Motor neuron (in vitro differentiated cells): ENCODE measurements at regions of chr15 and their contacts with region 1.

Region 1: DNA sequence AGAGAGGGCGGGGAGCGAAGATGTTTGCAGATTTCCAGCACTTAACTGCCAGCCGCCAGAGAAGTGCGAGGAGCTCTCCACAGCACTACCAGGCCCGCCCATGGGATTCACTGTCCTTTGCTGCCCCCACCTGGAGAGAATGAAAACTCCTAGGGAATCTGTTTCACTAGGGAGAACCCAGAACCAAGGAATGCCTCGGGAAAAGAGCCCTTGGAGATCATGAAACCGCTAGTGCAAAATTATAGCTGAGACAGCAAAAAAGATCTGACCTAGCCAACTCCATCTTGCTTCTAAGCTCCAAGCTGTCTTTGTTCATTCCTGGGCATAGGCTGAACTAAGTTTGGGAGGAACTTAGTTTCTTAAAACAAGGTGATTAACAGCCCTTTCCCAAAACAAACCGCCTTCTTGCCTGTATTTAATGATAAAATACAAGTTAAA is 82.6 kb upstream of the GCNT3 start:
- ATAC-seq: peak; percentile 88 to 100 (median 98)
- H3K4me3 ChIP-seq: no peak overlapping the region
- H3K27ac ChIP-seq: no peak overlapping the region
- H3K4me1 ChIP-seq: peaks cover 0 to 3% of the 10 kb centered on the region in 2 donors

Region 2: DNA sequence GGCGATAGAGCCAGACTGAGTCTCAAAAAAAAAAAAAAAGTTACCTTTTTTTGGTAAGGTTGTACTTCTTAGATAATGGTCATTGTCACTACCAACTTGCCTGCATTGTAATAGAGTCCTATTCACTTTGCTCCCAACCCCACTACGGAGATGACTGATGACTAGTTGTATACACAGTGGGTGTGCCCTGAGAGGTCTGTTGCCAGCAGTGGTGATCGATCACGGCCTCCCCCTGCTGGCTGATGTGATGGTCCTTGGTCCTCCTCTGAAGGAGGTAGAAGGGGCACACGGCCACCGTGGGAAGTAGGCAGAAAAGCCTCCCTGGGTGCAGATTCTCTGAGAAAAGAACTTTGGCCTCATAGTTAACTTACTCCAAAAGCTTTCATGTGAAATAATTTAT is 93.3 kb after region 1 on chr15:
- in situ Hi-C with region 1: loop called in 3 of 9 experiments (anchors 10 to 25 kb)
- ATAC-seq: peak; percentile 50 to 100 (median 75)
- H3K4me3 ChIP-seq: no peak overlapping the region
- H3K27ac ChIP-seq: no peak overlapping the region
- H3K4me1 ChIP-seq: no peaks in the 10 kb centered on the region

Region 3: DNA sequence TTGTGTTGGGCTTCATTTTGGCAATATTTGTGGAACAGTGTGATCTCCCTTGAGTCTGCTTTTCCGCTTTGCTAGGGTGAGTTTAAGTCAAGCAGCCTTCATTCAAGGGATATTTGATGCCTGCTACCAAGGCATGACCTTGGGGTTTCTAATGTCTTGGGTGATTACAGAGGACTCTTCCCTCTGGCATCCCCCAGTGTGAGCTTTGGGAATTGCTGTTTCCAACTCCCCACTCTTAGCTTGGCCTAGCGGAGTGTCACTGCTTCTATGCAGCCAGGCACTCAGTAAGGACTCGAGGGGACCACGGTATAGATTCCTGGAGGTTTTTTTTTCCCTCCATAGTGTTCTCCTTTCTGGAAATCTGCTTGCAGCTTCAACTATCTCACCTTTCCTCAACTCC is 103.7 kb after region 1 on chr15:
- in situ Hi-C with region 1: loop called in 3 of 9 experiments (anchors 10 to 25 kb)
- ATAC-seq: peak in 5 of 8 experiments; percentile 36 to 86 (median 72)
- H3K4me3 ChIP-seq: no peak overlapping the region
- H3K27ac ChIP-seq: no peak overlapping the region
- H3K4me1 ChIP-seq: peaks cover 0 to 4% of the 10 kb centered on the region in 2 donors

Region 4: DNA sequence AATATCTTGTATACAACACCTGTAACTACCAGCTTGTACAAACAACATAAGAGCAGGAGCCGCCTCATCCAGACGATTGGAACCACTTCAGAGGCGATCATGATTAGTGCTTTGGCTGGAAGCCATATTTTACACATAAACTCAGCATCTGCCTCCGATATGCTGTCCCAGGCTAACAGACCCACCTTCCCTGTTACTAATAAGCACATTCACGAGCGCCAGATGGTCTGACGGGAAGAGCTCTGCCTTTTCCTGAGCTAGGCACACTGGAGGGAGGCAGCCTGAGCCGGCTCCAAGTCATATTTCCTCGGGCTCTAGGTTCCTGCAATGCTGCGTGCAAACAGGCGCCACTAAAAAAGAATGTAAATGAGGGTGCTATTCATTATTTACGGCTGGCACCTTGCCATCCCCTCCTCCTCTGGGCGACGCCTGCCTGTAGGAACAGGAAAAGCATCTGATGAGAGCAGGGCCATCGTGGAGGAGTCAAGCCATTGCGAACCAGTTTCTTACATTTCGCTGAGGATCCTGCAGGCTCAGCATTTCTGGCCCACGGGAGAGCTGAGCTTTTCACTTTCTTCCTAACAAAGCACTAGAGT is 770.6 kb after region 1 on chr15:
- in situ Hi-C with region 1: loop called in 1 of 9 experiments (anchors 25 kb)
- ATAC-seq: peak; percentile 93 to 99 (median 98)
- H3K4me3 ChIP-seq: no peak overlapping the region
- H3K27ac ChIP-seq: peak overlapping the region; percentile 23 to 38
- H3K4me1 ChIP-seq: peaks cover 10% of the 10 kb centered on the region in 2 donors